ENCODE measurements at regions of chrX and their contacts with region 1.

Region 1: DNA sequence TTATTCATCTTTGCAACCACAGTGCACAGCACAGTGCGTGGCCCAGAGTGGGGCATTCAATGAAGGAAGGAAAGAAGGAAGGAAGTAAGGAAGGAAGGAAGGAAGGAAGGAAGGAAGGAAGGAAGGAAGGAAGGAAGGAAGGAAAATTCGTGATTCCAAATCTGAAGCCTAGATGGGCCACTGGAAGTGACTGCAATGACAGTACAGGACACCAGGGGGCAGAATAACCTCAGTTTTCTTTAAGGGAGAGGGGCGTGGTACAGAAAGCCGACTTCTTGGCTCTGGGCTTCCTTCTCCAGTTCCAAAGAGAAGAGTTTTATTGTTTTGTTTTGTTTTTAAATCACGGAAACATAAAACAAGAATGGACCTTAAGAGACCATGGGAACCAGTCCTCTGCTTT is 47.8 kb downstream of the APLN start:
- DNase-seq: no peak
- ATAC-seq: peak; percentile 61
- H3K4me3 Mint-ChIP-seq: no peak overlapping the region
- H3K27ac Mint-ChIP-seq: no peak overlapping the region
- H3K4me1 Mint-ChIP-seq: peaks cover 19% of the 10 kb centered on the region
- H3K27me3 Mint-ChIP-seq: no peaks in the 10 kb centered on the region
- CTCF ChIP-seq: no peak

Region 2: DNA sequence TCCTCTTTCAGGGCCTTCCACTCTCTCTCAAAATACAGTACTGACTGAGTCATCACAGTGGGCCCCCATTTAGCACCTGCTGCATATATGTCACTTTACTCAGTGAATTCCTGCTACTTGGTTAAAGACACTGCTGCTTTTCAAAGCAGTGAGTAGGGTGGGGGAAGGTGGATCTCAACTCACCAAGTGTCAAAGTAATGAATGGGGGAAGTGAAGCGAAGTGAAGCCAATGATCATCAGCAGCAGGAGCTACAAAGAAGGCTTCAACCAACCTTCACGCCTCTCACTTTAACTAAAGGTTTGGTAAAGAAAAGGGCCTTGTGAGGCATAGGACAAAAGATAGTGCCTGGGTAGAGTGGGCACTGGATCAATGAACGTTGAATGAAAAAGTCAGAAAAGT is 507.7 kb before region 1 on chrX:
- CTCF ChIA-PET with region 1: no interaction called
- POLR2A ChIA-PET with region 1: no interaction called
- intact Hi-C with region 1: no loop called
- DNase-seq: no peak
- ATAC-seq: no peak
- H3K4me3 Mint-ChIP-seq: no peak overlapping the region
- H3K27ac Mint-ChIP-seq: no peak overlapping the region
- H3K4me1 Mint-ChIP-seq: no peaks in the 10 kb centered on the region
- H3K27me3 Mint-ChIP-seq: no peaks in the 10 kb centered on the region
- CTCF ChIP-seq: no peak

Region 3: GRCh38 chrX:129637217-129638109 is 30.5 kb after region 1 on chrX:
- CTCF ChIA-PET with region 1: no interaction called
- POLR2A ChIA-PET with region 1: no interaction called
- intact Hi-C with region 1: loop called (anchors 1 kb)
- DNase-seq: peak; percentile 58
- ATAC-seq: peak; percentile 67
- H3K4me3 Mint-ChIP-seq: no peak overlapping the region
- H3K27ac Mint-ChIP-seq: no peak overlapping the region
- H3K4me1 Mint-ChIP-seq: no peaks in the 10 kb centered on the region
- H3K27me3 Mint-ChIP-seq: no peaks in the 10 kb centered on the region
- CTCF ChIP-seq: no peak

Region 4: DNA sequence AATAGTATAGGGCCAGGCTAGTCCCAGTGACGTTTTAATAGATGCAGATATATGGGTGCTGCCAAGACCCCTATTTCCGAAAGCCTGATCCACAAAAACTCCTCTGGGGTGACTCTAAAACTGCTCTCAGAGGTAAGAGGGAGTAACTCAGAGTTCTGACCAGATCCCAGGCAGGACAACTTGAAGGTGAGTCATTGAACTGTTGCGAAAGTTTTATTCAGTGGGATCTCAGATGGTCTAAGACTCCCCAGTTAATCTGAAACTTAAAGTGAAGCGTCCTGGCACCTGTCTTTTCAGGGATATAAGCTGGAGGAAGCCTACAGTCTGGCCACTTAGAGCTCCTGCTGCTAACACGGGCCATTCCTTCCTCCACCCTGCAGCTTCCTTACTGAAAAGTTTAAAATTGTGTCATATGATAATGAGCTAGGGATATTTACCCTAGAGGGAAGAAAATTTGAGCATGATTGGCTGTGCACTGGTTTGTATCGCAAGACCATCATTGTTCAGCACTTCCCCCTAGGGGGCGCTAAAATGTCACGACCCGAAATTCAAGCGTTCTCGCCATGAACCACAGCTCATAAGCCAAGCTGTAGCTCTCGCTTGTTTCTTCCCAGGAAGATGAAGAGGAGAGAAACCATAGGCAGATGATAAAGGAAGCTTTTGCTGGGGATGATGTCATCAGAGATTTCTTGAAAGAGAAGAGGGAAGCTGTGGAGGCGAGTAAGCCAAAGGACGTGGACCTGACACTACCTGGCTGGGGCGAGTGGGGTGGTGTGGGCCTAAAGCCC is 318.6 kb after region 1 on chrX:
- CTCF ChIA-PET with region 1: no interaction called
- POLR2A ChIA-PET with region 1: no interaction called
- intact Hi-C with region 1: loop called (anchors 2 kb)
- DNase-seq: peak; percentile 30
- ATAC-seq: peak; percentile 84
- H3K4me3 Mint-ChIP-seq: no peak overlapping the region
- H3K27ac Mint-ChIP-seq: no peak overlapping the region
- H3K4me1 Mint-ChIP-seq: peaks cover 4% of the 10 kb centered on the region
- H3K27me3 Mint-ChIP-seq: no peaks in the 10 kb centered on the region
- CTCF ChIP-seq: no peak

Measured in activated B cell treated with CpG ODN at 0.5 μM for 24 hours (primary cell).